SK-N-SH (cell line): ENCODE measurements at regions of chr1 and their contacts with region 1.

Region 1: GRCh38 chr1:14899581-14900085 is 253.9 kb upstream of the TMEM51 start:
- DNase-seq: no peak
- H3K4me3 ChIP-seq: no peak overlapping the region
- H3K27ac ChIP-seq: no peak overlapping the region
- H3K4me1 ChIP-seq: peaks cover 0 to 11% of the 10 kb centered on the region in 2 experiments; a peak in 1 of 4 replicates
- H3K27me3 ChIP-seq: no peaks in the 10 kb centered on the region
- CTCF ChIP-seq: no peak
- EP300 ChIP-seq: no peak
- RAD21 ChIP-seq: no peak

Region 2: DNA sequence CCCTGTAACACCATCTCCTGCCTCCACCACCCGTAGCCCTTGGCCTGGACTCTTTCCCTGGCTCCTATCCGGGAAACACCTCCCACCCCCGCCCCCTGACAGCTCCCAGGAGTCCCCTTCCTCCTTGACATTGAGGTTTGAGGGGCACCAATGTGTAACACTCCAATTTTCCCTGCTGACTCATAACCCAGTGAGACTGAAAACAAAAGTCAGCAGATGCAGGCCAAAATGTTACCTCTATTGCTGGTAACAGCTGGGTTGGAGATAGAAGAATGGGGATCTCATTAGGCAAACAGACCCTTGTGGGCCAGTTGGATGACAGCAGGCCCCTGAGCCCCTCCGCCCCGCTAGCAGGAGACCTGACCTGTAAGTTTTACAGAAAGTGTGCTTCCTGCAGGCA is 63.9 kb before region 1 on chr1:
- CTCF ChIA-PET with region 1: no interaction called
- POLR2A ChIA-PET with region 1: no interaction called
- DNase-seq: no peak
- H3K4me3 ChIP-seq: no peak overlapping the region
- H3K27ac ChIP-seq: no peak overlapping the region
- H3K4me1 ChIP-seq: no peaks in the 10 kb centered on the region
- H3K27me3 ChIP-seq: no peaks in the 10 kb centered on the region
- CTCF ChIP-seq: no peak
- EP300 ChIP-seq: no peak
- RAD21 ChIP-seq: no peak

Region 3: GRCh38 chr1:14915356-14916054 is 15.9 kb after region 1 on chr1:
- CTCF ChIA-PET with region 1: interaction called, 14 read pairs
- POLR2A ChIA-PET with region 1: no interaction called
- DNase-seq: peak; percentile 84
- H3K4me3 ChIP-seq: no peak overlapping the region; a peak in 1 of 4 replicates
- H3K27ac ChIP-seq: no peak overlapping the region
- H3K4me1 ChIP-seq: peaks cover 0 to 7% of the 10 kb centered on the region in 2 experiments; a peak in 1 of 4 replicates
- H3K27me3 ChIP-seq: no peaks in the 10 kb centered on the region
- CTCF ChIP-seq: peak; percentile 92
- EP300 ChIP-seq: no peak
- RAD21 ChIP-seq: peak; percentile 70